OCI-LY7 (cell line): ENCODE measurements at regions of chr17 and their contacts with region 1.

Region 1: DNA sequence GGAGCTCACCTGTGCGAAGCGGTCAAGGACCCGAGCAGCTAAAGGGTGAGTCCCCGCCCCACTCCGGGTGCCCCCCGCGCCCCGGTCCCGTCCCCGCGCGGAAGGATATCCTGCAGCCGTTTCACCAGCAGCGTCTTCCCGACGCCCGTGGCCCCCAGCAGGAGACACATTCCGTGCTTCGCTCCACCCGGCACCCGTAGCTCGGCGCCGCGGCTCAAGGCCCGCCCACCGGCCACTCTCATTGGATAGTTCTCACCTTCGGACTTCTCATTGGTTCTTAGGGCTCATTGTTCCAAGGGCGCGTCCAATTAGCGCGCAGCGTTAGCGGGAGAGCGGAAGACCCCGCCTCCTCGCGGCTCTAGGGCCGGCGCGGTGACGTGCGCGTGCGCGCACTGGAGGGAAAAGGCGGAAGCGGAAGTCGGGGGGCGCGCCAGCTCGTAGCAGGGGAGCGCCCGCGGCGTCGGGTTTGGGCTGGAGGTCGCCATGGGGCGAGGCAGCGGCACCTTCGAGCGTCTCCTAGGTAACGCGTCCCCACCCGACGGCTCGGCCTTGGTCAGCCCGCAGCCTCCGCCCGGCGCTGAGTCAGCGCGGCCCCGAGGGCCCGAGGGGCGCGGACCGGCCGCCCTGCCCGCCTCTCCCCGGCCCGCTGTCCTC is at the starts of genes ARL16 and HGS:
- DNase-seq: peak; percentile 100
- H3K4me3 ChIP-seq: peak within 1 kb of the TSS; percentile 78
- H3K27ac ChIP-seq: peak within 1 kb of the TSS; percentile 41
- H3K4me1 ChIP-seq: peaks cover 23% of the 10 kb centered on the region
- CTCF ChIP-seq: no peak
- total RNA-seq, gene ARL16: 86.1 and 86.4 TPM in 2 replicates
- total RNA-seq, gene HGS: 120 and 162 TPM in 2 replicates

Region 2: DNA sequence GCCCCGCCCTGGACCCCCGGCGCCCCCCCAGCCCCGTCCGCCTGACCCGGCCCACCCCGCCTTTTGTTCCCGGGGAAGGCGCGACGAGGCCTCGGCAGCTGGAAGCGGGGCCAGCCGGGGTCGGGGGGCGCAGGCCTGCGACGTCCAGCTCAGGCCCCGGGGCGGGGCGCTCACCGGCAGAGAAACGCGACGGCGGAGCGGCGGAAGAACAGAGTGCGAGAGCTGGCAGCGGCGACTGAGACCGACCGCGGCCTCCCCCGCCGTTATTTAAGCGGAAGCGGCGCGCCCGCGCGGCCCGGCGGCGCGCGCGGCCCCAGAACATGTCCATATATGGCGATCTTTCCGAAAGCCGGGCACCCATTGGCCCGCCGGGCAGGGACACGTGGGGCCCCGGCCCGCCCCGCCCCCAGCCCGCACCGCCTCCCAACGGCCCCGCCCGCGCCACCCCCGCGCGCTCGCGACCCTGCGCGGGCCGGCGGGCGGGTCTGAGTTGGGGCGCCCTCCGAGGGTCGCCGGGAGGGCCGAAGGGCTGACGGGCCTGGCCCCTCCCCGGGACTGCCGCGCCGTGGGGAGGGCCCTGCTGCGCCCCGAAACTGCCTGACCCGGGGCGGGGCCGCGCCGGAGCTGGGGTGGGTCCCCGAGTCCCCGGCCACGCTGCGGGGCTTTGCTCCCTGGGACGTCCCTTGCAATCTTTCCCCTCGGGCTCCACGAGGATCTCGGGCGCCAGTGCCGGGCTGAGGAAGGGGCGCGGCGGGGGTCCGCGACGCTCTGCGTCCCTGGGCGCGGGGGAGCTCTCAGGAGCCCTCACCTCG is 170.9 kb before region 1 on chr17 and contains the start of gene ACTG1:
- CTCF ChIA-PET with region 1: no interaction called
- POLR2A ChIA-PET with region 1: no interaction called
- intact Hi-C with region 1: loop called (anchors 5 kb)
- DNase-seq: peak; percentile 98
- H3K4me3 ChIP-seq: peak within 1 kb of the TSS; percentile 90
- H3K27ac ChIP-seq: peak within 1 kb of the TSS; percentile 89
- H3K4me1 ChIP-seq: peaks cover 58% of the 10 kb centered on the region
- CTCF ChIP-seq: no peak
- total RNA-seq, gene ACTG1: 2,245 and 2,707 TPM in 2 replicates

Region 3: DNA sequence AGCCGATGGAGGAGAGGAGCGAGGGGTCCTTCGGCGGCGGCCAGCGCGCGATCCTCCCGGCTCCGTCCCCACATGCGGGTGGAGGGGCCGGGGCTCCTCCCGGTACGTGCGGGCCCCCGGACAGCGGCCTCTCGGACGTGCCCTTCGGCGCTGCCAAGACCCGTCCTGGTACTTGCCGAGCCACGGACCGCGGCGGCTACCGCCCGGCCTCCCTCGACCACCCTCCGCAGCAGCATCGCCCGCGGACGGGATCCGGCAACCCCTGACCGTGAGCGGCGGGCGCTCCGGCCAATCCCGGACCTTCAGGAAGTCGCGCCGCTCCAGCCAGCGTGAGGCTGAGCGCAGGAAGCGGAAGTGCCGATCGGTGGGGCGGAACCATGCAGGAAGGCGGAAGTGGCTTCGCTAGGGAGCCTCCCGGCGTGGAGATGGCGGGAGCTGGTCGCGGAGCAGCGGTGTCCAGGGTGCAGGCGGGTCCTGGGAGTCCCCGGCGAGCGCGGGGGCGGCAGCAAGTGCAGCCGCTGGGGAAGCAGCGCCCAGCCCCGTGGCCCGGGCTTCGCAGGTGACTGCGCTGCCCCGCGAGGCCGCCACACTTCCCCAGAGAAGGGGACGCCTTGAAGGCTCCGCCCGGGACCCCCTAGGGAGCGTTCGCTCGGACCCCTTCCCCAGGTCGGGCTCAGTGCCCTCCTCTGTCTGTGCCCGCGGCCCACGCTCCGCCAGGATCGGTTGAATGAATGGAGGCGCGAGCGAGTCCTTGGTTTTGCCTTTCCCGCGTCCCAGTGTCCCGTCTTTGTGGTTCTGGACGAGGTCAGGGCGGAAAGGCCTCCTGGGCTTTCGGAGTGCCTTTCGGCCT is 17.1 kb before region 1 on chr17 and contains the starts of genes CCDC137 and OXLD1:
- CTCF ChIA-PET with region 1: no interaction called
- POLR2A ChIA-PET with region 1: interaction called, 8 read pairs
- intact Hi-C with region 1: loop called (anchors 1 kb)
- DNase-seq: peak; percentile 99
- H3K4me3 ChIP-seq: peak within 1 kb of the TSS; percentile 100
- H3K27ac ChIP-seq: peak within 1 kb of the TSS; percentile 62
- H3K4me1 ChIP-seq: peaks cover 25% of the 10 kb centered on the region
- CTCF ChIP-seq: no peak
- total RNA-seq, gene CCDC137: 39.4 and 39.9 TPM in 2 replicates
- total RNA-seq, gene OXLD1: 148 and 151 TPM in 2 replicates

Region 4: GRCh38 chr17:81702971-81703746 is 19.4 kb after region 1 on chr17 and contains the start of gene MRPL12:
- CTCF ChIA-PET with region 1: no interaction called
- POLR2A ChIA-PET with region 1: interaction called, 12 read pairs
- intact Hi-C with region 1: loop called (anchors 1 kb)
- DNase-seq: peak; percentile 99
- H3K4me3 ChIP-seq: peak within 1 kb of the TSS; percentile 92
- H3K27ac ChIP-seq: peak within 1 kb of the TSS; percentile 80
- H3K4me1 ChIP-seq: peaks cover 23% of the 10 kb centered on the region
- CTCF ChIP-seq: no peak
- total RNA-seq, gene MRPL12: 49.8 and 67.2 TPM in 2 replicates

Region 5: GRCh38 chr17:81722184-81723120 is 38.7 kb after region 1 on chr17:
- CTCF ChIA-PET with region 1: no interaction called
- POLR2A ChIA-PET with region 1: no interaction called
- intact Hi-C with region 1: no loop called
- DNase-seq: no peak
- H3K4me3 ChIP-seq: no peak overlapping the region
- H3K27ac ChIP-seq: no peak overlapping the region
- H3K4me1 ChIP-seq: peaks cover 7% of the 10 kb centered on the region
- CTCF ChIP-seq: no peak